Heart right ventricle (tissue), 16 donors: ENCODE measurements at regions of chr1 and their contacts with region 1.

Region 1: DNA sequence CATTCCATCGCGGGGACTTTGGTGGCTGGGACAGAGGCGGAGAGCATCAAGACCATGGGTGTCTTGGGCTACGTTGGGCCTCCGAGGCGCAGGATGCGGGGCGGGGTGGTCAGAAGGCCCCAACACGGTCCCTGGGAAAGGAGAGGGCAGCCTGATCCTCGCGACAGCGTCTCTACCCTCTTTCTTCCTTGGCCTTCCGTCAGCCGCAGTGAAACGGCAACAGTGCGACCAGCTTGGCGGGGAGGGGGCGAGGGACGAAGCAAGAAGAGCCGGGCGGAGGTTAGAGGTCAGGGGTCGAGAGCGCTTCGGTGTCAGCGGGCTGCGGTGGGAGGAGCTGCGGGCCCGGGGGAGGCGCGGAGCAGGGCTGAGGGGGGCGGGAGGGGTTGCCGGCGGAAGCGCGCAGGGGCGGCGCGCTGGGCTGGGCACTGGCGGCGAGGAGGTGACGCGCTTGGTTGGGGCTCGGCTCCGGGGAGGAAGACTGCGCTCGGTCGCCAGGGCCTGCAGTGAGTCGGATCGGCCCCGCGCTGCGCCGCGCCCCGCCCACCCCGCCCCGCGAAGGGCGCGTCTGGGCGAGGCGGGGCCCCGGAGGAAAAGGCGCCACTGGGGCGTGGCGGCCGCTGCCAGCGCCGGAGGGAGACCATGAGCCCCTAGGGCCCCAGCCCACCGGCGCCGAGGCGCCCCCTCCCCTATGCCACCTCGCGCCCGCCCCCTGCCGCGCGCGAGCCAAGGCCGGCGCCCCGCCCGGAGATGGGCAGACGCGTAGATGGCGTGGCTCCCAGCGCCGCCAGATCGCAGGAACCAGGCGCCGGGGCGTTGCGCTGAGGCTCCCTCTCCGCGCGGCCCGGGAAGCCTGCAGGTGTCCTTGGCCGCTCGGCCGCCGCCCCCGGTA is at the start of gene KCNC4:
- DNase-seq: peak; percentile 91
- ATAC-seq: peak; percentile 89 to 93 (median 92)
- H3K4me3 ChIP-seq: peak within 1 kb of the TSS; percentile 51 to 95 (median 74)
- H3K27ac ChIP-seq: peak within 1 kb of the TSS; percentile 62 to 94 (median 90)
- H3K4me1 ChIP-seq: peaks cover 4 to 54% (median 39%) of the 10 kb centered on the region in 9 donors
- H3K27me3 ChIP-seq: peaks cover 0 to 24% (median 0%) of the 10 kb centered on the region in 7 donors
- CTCF ChIP-seq: peak in 2 of 9 donors; percentile 13 to 24
- total RNA-seq, gene KCNC4: 2.6 to 13.8 (median 6.1) TPM

Region 2: DNA sequence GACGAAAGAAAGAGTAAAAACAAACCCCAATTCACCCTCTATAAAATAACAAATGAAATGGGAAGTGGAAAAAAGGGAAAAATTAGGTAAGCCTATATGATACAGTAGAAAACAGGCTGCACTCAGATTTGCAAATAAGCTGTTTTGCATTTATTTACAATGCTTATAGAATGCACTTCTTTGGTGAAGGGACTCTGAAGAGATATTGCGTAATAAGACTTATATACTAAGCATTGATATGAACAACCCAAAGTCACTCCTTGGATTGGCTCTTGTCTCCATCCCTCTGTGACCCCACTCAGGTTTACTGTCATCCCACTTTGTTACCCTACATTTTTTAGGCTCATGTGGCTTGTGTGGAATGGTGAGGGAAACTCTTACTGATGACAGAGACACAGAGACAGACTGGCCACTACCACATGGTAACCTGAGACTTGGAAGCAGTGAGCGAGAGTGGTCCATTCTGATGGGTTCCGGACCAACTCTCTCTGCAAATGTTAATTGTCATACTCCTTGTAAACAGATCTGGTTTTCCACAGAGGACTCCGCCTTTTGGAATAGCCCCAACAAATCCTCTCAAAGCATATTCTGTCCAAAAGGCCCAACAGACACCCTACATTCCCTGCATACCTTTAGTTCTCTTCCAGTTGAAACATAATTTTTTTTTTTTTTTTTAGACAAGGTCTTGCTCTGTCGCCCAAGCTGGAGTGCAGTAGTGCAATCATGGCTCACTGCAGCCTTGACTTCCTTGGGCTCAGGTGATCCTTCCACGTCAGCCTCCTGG is 486.9 kb before region 1 on chr1:
- intact Hi-C with region 1: no loop called
- DNase-seq: no peak
- ATAC-seq: no peak
- H3K4me3 ChIP-seq: no peak overlapping the region
- H3K27ac ChIP-seq: no peak overlapping the region
- H3K4me1 ChIP-seq: peaks cover 0 to 6% (median 0%) of the 10 kb centered on the region in 9 donors
- H3K27me3 ChIP-seq: no peaks in the 10 kb centered on the region
- CTCF ChIP-seq: no peak

Region 3: DNA sequence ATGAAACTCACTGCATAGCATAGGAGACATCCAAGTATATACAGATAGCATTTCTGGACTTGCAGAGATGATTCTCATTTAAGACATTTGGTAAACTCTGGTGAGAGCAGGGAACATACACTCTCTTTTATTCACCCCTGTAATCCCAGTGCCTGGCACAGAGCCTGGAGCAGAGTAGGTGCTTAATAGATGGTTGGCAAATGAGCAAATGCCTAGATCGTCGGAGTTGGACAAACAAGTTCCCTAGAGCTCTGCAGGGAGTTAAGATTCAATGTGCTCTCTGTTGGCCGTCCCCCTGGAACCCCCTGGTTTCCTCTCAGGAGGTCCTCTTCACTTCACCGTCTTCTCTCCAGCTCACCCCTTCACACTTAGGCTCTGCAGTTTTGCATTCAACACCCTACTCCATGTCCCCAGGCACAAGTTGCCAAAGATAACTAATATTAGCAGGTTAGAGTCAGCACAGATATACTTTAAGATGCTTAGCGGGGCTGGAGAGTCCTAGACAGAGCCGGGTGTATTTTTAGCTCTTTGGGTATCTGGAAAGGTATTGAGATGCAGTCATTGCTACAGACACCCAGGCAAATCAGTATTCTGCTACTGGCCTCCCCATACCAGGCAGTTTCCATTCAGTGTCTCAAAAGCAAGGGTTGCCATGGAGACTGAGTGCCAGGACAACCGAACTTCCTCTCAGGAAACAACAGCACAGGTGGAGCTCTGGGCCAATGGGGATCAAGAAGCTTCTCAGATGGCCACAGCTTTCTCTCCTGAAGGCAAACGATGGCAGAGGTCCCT is 45.2 kb after region 1 on chr1:
- intact Hi-C with region 1: loop called in 4 of 10 experiments (anchors 5 to 10 kb)
- DNase-seq: no peak
- ATAC-seq: peak; percentile 42 to 94 (median 72)
- H3K4me3 ChIP-seq: no peak overlapping the region
- H3K27ac ChIP-seq: peak overlapping the region in 3 of 10 donors; percentile 39 to 60 (median 39)
- H3K4me1 ChIP-seq: peaks cover 0 to 28% (median 17%) of the 10 kb centered on the region in 9 donors
- H3K27me3 ChIP-seq: no peaks in the 10 kb centered on the region
- CTCF ChIP-seq: no peak

Region 4: GRCh38 chr1:110312188-110313121 is 102.5 kb after region 1 on chr1:
- intact Hi-C with region 1: loop called in 8 of 10 experiments (anchors 1 to 2 kb)
- DNase-seq: peak; percentile 79 to 83
- ATAC-seq: peak; percentile 93 to 96 (median 96)
- H3K4me3 ChIP-seq: no peak overlapping the region
- H3K27ac ChIP-seq: no peak overlapping the region
- H3K4me1 ChIP-seq: peaks cover 3 to 52% (median 31%) of the 10 kb centered on the region in 9 donors
- H3K27me3 ChIP-seq: no peaks in the 10 kb centered on the region
- CTCF ChIP-seq: peak; percentile 91 to 98 (median 96)

Region 5: DNA sequence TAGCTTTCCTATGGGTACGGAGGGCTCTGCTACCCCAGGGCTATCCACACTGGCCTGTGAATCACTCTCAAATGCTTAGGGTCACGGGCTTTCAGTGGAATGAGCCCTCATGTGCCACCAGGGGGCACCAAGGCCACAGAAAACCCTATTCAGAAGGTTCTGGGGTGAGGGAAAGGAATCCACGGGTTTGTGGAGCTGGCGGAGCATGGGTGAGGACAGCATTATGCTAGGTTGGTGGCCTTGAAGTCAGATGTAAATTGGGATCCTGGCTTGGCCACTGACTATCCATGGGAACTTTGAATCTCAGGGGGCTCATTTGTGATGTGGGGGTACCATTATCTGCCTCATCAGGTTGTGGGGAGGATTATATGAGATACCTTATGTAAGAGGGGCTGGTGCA is 202.6 kb after region 1 on chr1:
- intact Hi-C with region 1: loop called in 3 of 10 experiments (anchors 2 to 5 kb)
- DNase-seq: peak; percentile 58 to 65
- ATAC-seq: peak; percentile 34 to 77 (median 44)
- H3K4me3 ChIP-seq: no peak overlapping the region
- H3K27ac ChIP-seq: no peak overlapping the region
- H3K4me1 ChIP-seq: peaks cover 9 to 32% (median 19%) of the 10 kb centered on the region in 9 donors
- H3K27me3 ChIP-seq: no peaks in the 10 kb centered on the region
- CTCF ChIP-seq: peak; percentile 62 to 83 (median 78)

Region 6: GRCh38 chr1:110495926-110496600 is 286.1 kb after region 1 on chr1:
- intact Hi-C with region 1: loop called in 6 of 10 experiments (anchors 5 to 10 kb)
- DNase-seq: peak; percentile 49 to 77
- ATAC-seq: peak; percentile 75 to 92 (median 82)
- H3K4me3 ChIP-seq: no peak overlapping the region
- H3K27ac ChIP-seq: no peak overlapping the region
- H3K4me1 ChIP-seq: no peaks in the 10 kb centered on the region
- H3K27me3 ChIP-seq: no peaks in the 10 kb centered on the region
- CTCF ChIP-seq: peak; percentile 73 to 95 (median 89)

Region 7: DNA sequence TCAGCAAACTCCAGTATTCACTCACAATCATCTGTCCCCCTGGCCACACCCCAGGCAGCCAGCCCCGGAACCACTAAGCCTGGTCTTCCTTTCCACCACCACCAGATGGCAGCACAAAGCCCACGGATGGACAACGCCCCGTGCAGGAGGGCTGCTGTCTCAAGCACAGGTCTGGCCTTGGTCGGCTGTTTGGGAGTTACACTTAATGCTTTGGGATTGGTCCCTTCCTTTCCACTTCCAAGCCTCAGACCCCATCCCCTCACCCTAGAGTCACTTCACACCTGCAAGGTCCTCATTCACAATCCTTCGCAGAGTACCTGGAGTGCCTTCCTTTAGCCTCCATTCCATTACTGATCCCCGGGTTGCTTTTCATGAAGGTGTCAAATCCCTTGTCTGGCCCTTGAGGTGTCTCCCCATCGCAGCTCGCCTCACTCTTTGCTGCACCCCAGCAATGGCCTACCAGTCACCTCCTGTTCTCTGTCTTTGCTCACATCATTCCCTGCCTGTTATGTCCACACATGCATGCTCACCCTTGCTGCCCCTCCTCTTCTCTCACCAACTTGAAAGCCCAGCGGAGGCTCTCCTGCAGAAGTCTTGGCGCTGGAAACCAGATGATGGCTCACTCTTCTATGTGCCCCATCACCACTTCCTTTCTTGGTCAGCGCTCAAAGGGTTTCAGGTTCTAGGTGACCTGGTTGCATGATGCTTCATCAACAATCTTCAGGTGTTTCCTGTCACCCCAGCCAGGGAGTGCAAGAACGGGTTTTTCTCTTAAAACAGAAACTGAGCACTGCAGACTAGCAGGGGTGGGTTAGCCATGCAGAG is 421.1 kb after region 1 on chr1:
- intact Hi-C with region 1: no loop called
- DNase-seq: peak; percentile 75 to 83
- ATAC-seq: peak; percentile 44 to 73 (median 62)
- H3K4me3 ChIP-seq: peak overlapping the region in 1 of 10 donors; percentile 10
- H3K27ac ChIP-seq: peak overlapping the region in 1 of 10 donors; percentile 79
- H3K4me1 ChIP-seq: peaks cover 4 to 49% (median 16%) of the 10 kb centered on the region in 9 donors
- H3K27me3 ChIP-seq: peaks cover 0 to 26% (median 4%) of the 10 kb centered on the region in 7 donors
- CTCF ChIP-seq: peak; percentile 78 to 92 (median 88)